WTC11 (cell line): ENCODE measurements at regions of chr11 and their contacts with region 1.

Region 1: GRCh38 chr11:6443269-6444003 is 2.6 kb upstream of the HPX start:
- DNase-seq: peak; percentile 68
- ATAC-seq: peak; percentile 90
- H3K4me3 Mint-ChIP-seq: no peak overlapping the region
- H3K27ac Mint-ChIP-seq: no peak overlapping the region
- H3K4me1 Mint-ChIP-seq: no peaks in the 10 kb centered on the region
- H3K27me3 Mint-ChIP-seq: no peaks in the 10 kb centered on the region
- CTCF ChIP-seq: peak; percentile 80

Region 2: DNA sequence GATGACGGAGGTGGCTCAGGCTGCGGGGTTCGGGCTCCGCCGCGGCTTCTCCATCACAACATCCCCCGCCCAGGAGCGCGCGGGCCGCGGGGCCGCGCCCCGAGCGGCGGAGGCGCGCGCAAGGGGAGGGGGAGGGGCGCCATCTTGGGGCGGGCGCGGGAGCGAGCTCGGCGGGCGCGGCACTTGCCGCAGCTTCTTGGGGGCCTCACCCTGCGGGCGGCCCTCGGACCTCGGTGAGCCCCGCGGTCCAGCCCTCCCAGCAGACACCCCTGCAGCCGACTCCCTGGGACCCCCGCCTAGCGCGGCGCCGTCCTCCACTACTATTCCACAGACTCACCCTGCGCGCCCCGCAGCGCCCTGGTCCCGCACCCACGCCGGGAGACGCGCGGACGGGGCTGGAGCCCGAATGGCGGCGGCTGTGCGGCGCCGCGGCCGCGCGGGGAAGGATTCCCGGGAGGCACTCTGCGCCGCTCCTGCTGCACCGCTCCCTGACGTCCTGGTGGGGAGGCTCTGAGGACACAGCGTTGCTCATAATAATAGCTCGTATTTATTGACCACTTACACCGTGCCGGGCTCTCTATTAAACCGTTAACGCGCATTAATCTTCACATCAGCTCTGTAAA is 24.3 kb before region 1 on chr11 and contains the start of gene APBB1:
- CTCF ChIA-PET with region 1: interaction called, 19 read pairs
- POLR2A ChIA-PET with region 1: interaction called, 3 read pairs
- DNase-seq: peak; percentile 68
- ATAC-seq: peak; percentile 78
- H3K4me3 Mint-ChIP-seq: peak within 1 kb of the TSS; percentile 72
- H3K27ac Mint-ChIP-seq: no peak within 1 kb of the TSS
- H3K4me1 Mint-ChIP-seq: peaks cover 3% of the 10 kb centered on the region
- H3K27me3 Mint-ChIP-seq: peaks cover 43% of the 10 kb centered on the region
- CTCF ChIP-seq: no peak
- total RNA-seq, gene APBB1: 32.1 to 33.1 TPM (median 32.7 TPM) in 3 replicates

Region 3: DNA sequence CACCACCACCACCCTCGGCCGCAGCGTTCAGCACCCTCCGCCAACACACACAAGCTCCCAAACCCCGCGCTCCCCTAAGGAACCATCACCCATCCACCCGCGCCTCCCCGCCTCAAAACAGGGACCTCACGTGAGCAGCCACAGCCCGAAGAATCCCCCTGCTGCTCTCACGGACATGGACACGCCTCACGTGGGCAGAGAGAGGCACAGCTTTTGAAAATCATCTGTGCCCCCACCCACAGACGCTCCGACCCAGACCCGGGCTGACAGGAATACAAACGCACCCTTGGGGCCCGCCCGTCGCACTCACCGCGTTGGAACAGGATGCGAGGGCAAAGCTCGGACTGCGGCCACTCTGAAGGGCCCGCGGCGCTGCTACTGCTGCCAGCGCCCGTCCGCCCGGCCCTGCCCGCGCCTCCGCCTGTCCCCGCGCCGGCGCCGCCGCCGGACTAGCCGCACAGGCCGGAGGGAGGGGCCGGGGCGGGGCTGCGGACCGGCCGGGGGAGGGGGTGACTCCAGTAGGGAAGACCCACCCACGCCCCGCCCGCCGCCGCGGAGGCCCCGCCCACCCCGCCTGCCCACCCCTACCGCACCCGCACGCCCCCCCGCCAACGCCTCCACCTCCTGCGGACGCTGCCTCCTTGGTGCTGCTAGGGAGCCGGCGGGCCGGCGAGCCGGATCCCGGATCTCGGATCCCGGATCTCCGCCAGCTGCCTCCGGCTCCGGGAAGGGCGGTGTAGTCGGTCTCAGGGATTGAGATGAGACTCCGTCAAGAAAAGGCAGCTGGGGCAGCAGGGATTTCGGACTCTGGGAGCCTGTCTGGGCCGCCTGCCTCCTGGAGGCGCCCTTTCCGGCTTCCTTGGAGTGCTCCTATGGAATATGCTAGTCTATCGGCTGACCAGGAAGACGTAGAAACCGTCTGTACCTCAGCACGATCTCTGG is 30.3 kb after region 1 on chr11 and contains the start of gene TRIM3:
- CTCF ChIA-PET with region 1: interaction called, 35 read pairs
- POLR2A ChIA-PET with region 1: no interaction called
- DNase-seq: peak; percentile 91
- ATAC-seq: peak; percentile 49
- H3K4me3 Mint-ChIP-seq: peak within 1 kb of the TSS; percentile 79
- H3K27ac Mint-ChIP-seq: peak within 1 kb of the TSS; percentile 93
- H3K4me1 Mint-ChIP-seq: peaks cover 28% of the 10 kb centered on the region
- H3K27me3 Mint-ChIP-seq: peaks cover 12% of the 10 kb centered on the region
- CTCF ChIP-seq: no peak
- total RNA-seq, gene TRIM3: 16.6 to 21.3 TPM (median 19.0 TPM) in 3 replicates

Region 4: DNA sequence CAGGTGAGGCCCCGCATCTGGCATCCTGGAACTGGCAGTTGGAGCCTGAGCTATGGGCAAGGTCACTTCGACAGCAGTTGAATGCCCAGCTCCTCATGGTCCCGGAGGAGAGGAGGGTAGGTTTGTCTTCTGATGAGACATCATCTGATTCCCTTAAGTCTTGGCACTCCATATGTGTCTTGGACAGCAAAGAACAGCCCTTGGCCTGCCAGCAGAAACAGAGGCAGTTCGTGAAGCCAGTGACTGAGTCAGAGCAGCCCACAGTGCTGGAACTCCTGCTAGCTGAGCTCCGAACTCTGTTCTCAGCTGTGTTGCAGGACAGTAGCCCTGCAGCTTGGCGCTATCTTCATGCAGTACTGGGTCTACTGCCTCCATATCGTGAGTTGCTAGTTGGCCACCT is 54.7 kb after region 1 on chr11:
- CTCF ChIA-PET with region 1: interaction called, 13 read pairs
- POLR2A ChIA-PET with region 1: no interaction called
- DNase-seq: no peak
- ATAC-seq: no peak
- H3K4me3 Mint-ChIP-seq: no peak overlapping the region
- H3K27ac Mint-ChIP-seq: no peak overlapping the region
- H3K4me1 Mint-ChIP-seq: peaks cover 9% of the 10 kb centered on the region
- H3K27me3 Mint-ChIP-seq: no peaks in the 10 kb centered on the region
- CTCF ChIP-seq: no peak

Region 5: DNA sequence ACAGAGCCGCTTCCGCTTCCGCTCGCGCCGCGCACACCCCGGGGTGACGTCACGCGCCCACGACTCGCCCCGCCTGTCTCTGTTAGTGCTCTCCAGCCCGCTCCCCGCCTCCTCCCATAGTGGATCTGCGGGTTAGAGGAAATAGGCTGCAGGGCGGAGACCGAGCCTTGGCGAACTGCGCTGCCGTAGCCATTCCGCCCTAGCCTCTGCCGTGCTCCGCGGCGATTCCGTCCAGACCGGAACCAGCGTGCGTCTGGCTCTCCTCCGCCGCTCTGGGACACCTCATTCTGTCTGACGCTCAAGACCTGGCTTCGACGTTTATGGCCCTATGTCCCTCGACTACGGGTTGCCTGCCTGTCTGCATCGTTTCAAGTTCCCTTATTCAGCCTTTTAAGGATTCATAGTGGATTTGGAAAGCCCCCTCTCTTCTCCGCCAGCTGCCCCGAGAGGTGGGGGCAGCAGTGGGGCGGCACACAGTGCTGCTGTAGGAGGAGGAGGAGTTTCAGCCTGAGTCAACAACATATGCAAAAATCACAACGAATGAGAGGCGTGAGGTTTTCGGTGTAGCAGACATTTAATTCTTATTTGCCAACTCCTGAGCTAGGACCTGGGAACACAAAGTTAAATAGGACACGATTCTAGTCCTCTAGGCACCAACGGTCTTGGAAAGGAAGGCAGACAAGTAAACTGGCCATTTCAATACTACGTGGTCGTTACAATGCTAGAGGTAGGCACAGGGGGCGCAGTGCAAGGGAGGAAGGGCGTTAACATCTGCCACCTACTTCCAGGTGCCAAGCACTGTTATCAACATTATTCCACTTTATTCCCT is 169.0 kb after region 1 on chr11 and contains the start of gene TAF10:
- CTCF ChIA-PET with region 1: interaction called, 4 read pairs
- POLR2A ChIA-PET with region 1: interaction called, 11 read pairs
- DNase-seq: peak; percentile 95
- ATAC-seq: peak; percentile 85
- H3K4me3 Mint-ChIP-seq: peak within 1 kb of the TSS; percentile 88
- H3K27ac Mint-ChIP-seq: peak within 1 kb of the TSS; percentile 86
- H3K4me1 Mint-ChIP-seq: peaks cover 8% of the 10 kb centered on the region
- H3K27me3 Mint-ChIP-seq: no peaks in the 10 kb centered on the region
- CTCF ChIP-seq: no peak
- total RNA-seq, gene TAF10: 165 to 186 TPM (median 178 TPM) in 3 replicates